ENCODE measurements at regions of chr21 and their contacts with region 1.

Region 1: GRCh38 chr21:26405735-26406361 is 167.2 kb downstream of the CYYR1 start:
- DNase-seq: peak in 1 of 2 donors; percentile 49
- ATAC-seq: peak; percentile 89 to 94 (median 91)
- H3K4me3 ChIP-seq: no peak overlapping the region
- H3K4me3 Mint-ChIP-seq: peak overlapping the region; percentile 58
- H3K27ac ChIP-seq: no peak overlapping the region
- H3K27ac Mint-ChIP-seq: peak overlapping the region; percentile 5 to 85
- H3K4me1 ChIP-seq: peaks cover 3% of the 10 kb centered on the region
- H3K4me1 Mint-ChIP-seq: peaks cover 38 to 61% of the 10 kb centered on the region in 2 donors
- H3K27me3 ChIP-seq: no peaks in the 10 kb centered on the region
- H3K27me3 Mint-ChIP-seq: no peaks in the 10 kb centered on the region
- CTCF ChIP-seq: no peak

Region 2: GRCh38 chr21:26199456-26199855 is 206.4 kb before region 1 on chr21:
- intact Hi-C with region 1: no loop called
- DNase-seq: no peak
- ATAC-seq: no peak
- H3K4me3 ChIP-seq: no peak overlapping the region
- H3K4me3 Mint-ChIP-seq: no peak overlapping the region
- H3K27ac ChIP-seq: no peak overlapping the region
- H3K27ac Mint-ChIP-seq: no peak overlapping the region
- H3K4me1 ChIP-seq: no peaks in the 10 kb centered on the region
- H3K4me1 Mint-ChIP-seq: no peaks in the 10 kb centered on the region
- H3K27me3 ChIP-seq: no peaks in the 10 kb centered on the region
- H3K27me3 Mint-ChIP-seq: no peaks in the 10 kb centered on the region
- CTCF ChIP-seq: no peak

Region 3: GRCh38 chr21:26366781-26367180 is 39.1 kb before region 1 on chr21:
- intact Hi-C with region 1: no loop called
- DNase-seq: no peak
- ATAC-seq: no peak
- H3K4me3 ChIP-seq: no peak overlapping the region
- H3K4me3 Mint-ChIP-seq: no peak overlapping the region
- H3K27ac ChIP-seq: no peak overlapping the region
- H3K27ac Mint-ChIP-seq: no peak overlapping the region
- H3K4me1 ChIP-seq: no peaks in the 10 kb centered on the region
- H3K4me1 Mint-ChIP-seq: no peaks in the 10 kb centered on the region
- H3K27me3 ChIP-seq: no peaks in the 10 kb centered on the region
- H3K27me3 Mint-ChIP-seq: peaks cover 0 to 2% of the 10 kb centered on the region in 2 donors
- CTCF ChIP-seq: no peak

Region 4: DNA sequence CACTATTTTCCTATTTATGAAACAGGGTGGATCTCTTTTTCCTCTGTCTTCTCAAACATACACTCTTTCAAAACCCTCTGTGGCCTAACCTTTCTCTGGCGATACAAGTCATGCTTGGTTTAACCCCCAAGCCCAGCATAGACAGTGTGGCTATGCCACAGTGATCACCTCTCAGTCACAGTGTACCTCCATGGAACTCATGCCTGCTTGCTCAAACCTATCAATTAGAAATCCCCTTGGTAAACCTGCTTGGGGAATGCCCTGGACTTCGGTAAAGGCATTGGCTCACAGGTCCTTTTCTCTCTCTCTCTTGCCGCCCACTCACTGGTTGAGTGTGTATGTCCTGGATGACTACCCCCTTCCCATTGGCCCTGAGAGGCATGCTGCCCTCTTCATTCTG is 19.7 kb after region 1 on chr21:
- intact Hi-C with region 1: no loop called
- DNase-seq: no peak
- ATAC-seq: no peak
- H3K4me3 ChIP-seq: no peak overlapping the region
- H3K4me3 Mint-ChIP-seq: no peak overlapping the region
- H3K27ac ChIP-seq: no peak overlapping the region
- H3K27ac Mint-ChIP-seq: no peak overlapping the region
- H3K4me1 ChIP-seq: no peaks in the 10 kb centered on the region
- H3K4me1 Mint-ChIP-seq: no peaks in the 10 kb centered on the region
- H3K27me3 ChIP-seq: no peaks in the 10 kb centered on the region
- H3K27me3 Mint-ChIP-seq: no peaks in the 10 kb centered on the region
- CTCF ChIP-seq: no peak

Region 5: DNA sequence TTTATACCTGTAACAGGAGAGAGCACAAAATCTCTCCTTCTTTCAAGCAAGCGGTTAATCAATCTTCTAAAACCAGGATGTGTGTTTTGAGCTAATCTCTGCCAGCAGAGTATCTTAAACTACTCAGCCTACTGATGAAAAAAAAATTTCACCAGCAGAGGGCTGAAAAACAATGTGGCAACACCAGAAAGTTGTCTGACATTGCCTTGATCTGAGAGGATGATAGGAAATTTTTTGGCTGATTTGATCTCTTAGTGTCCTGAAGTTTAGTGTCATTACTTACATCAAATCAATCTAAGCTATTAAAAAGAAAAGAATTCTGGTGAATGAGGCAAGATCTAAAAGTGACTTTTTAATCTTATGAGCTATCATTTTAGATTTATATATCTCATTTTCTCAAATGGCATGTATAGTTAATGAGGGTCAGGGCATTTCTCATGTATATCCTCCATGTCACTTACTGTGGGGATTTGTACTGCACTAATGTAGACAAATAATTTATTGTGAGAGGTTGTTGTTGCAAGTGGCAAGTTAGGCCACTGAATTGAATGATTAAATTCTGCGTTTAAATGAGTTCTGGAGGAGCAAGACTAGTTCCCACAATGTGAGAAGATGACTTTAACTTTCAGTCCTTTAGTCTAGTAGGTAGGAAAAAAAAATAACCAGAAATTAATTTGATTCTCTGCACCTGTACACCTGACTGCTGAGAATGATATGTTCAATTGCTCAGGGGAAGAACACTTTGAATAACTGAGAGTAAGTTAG is 428.5 kb after region 1 on chr21:
- intact Hi-C with region 1: loop called (anchors 10 kb)
- DNase-seq: peak in 1 of 2 donors; percentile 9
- ATAC-seq: peak; percentile 40 to 66 (median 57)
- H3K4me3 ChIP-seq: no peak overlapping the region
- H3K4me3 Mint-ChIP-seq: peak overlapping the region; percentile 79
- H3K27ac ChIP-seq: no peak overlapping the region
- H3K27ac Mint-ChIP-seq: peak overlapping the region; percentile 84 to 94
- H3K4me1 ChIP-seq: peaks cover 40% of the 10 kb centered on the region
- H3K4me1 Mint-ChIP-seq: peaks cover 72 to 74% of the 10 kb centered on the region in 2 donors
- H3K27me3 ChIP-seq: no peaks in the 10 kb centered on the region
- H3K27me3 Mint-ChIP-seq: no peaks in the 10 kb centered on the region
- CTCF ChIP-seq: no peak

Measured in natural killer cell (primary cell).